ENCODE measurements at regions of chr19 and their contacts with region 1.

Region 1: DNA sequence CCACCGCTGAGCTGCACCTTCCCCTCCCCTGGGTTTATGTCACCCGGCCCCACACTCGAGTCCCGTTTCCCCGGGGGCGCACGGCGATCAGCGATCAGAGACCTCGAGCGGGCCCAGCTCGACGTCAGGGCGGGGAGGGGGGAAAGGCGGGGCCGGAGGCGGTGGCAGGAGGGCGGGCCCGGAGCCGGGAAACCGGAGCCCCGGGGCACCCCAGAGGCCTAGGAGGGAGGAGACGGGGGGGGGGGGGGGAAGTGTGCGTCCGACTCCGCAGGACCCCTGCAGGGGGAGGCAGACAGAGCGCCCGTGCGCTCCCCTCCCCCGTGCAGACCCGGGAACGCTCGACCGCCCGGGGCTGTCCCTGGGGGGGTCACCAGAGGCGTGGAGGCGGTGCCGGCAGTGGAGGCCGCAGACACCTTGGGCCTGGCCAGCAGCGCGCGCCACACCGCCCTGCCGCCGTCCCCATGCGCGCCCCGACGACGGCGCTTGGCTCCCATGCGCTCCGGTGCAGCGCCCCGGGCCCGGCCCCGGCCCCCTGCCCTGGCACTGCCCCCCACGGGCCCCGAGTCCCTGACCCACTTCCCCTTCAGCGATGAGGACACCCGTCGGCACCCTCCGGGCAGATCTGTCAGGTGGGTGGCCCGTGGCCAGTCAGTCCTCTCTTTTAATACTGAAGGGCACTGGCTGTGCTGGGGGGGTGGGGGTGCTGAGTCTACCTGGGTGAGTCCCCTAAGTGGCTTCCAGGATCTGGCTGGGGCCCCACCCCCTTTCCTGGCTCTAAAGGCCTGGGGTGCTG is 11.8 kb downstream of the PDE4A start:
- DNase-seq: peak; percentile 69
- H3K4me3 Mint-ChIP-seq: peak overlapping the region; percentile 67
- H3K27ac Mint-ChIP-seq: peak overlapping the region; percentile 73
- H3K4me1 Mint-ChIP-seq: peaks cover 74% of the 10 kb centered on the region
- H3K27me3 Mint-ChIP-seq: peaks cover 17% of the 10 kb centered on the region

Region 2: DNA sequence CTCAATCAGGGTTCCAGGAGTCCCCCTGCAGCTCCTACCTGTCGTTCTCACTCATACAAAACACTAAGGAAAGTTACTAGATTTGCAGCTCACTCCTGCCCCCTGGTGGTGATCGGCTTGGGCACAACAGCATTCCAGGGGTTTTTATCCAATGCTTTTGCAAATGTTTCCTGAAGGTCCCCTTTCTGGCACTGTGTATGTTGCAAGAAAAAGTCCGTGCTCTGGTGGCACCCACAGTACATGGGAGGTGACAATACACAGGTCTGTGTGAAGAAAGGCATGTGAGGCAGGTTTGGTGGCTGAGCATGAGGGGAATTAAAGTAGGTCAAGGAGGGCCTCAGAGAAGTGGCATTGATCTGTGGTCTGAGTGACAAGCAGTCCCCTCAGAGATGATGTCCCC is 43.2 kb before region 1 on chr19:
- CTCF ChIA-PET with region 1: interaction called, 11 read pairs
- POLR2A ChIA-PET with region 1: no interaction called
- DNase-seq: peak; percentile 81
- H3K4me3 Mint-ChIP-seq: no peak overlapping the region
- H3K27ac Mint-ChIP-seq: peak overlapping the region; percentile 11
- H3K4me1 Mint-ChIP-seq: peaks cover 7% of the 10 kb centered on the region
- H3K27me3 Mint-ChIP-seq: no peaks in the 10 kb centered on the region

Region 3: GRCh38 chr19:10403137-10404021 is 28.8 kb before region 1 on chr19 and contains the start of gene CDC37:
- CTCF ChIA-PET with region 1: interaction called, 707 read pairs
- POLR2A ChIA-PET with region 1: interaction called, 780 read pairs
- DNase-seq: peak; percentile 98
- H3K4me3 Mint-ChIP-seq: peak within 1 kb of the TSS; percentile 83
- H3K27ac Mint-ChIP-seq: peak within 1 kb of the TSS; percentile 95
- H3K4me1 Mint-ChIP-seq: peaks cover 61% of the 10 kb centered on the region
- H3K27me3 Mint-ChIP-seq: no peaks in the 10 kb centered on the region
- total RNA-seq, gene CDC37: 239 to 244 TPM

Region 4: DNA sequence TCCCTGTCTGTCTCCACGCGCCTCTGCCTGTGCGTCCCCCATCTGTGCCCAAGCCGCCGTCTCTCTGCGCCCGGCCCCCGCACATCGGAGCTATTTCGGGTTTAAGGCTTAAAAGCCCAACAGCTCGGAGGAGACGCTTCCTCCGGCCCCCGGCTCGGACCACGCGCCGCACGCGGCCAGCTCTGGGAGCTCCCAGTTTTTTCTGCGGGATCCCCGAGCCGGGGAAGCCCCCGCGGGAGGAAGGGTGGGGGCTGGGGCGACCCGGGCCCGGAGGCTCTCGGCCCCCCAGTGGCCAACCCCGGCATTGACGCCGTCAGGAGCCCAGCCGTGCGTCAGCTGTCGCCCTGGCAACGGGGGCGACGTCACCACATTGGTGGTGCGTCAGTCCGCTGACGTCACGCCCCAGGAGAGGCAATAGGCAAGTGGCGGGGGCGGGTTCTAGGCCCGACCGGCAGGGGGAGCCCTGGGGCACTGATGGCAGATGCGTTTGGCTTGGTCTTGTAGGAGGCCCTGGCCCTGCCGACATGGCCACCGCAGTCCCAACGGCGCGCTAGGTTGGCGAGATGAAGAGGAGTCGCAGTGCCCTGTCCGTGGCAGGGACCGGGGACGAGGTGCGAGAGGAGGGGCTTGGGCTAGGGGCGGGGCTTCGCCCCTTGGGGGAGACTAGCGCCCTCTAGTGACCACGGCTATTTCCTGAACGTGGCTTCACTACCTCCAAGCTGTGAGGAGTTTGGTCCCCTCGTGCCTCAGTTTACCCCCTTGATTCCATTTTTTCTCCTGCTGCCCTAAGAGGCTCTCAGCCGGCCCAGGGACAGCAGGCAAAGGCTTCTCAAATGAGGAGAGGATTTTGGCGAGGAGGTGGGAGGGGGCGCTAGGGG is 15.5 kb before region 1 on chr19:
- CTCF ChIA-PET with region 1: interaction called, 707 read pairs
- POLR2A ChIA-PET with region 1: interaction called, 780 read pairs
- DNase-seq: peak; percentile 98
- H3K4me3 Mint-ChIP-seq: peak overlapping the region; percentile 73
- H3K27ac Mint-ChIP-seq: peak overlapping the region; percentile 88
- H3K4me1 Mint-ChIP-seq: peaks cover 74% of the 10 kb centered on the region
- H3K27me3 Mint-ChIP-seq: peaks cover 19% of the 10 kb centered on the region

Measured in activated CD4-positive, alpha-beta memory T cell treated with anti-CD3 and anti-CD28 coated beads, Interleukin-2, amount 10 ng/mL, durations not matched to agents 7 days and 5 days (primary cell).